HepG2 (cell line): ENCODE measurements at regions of chr9 and their contacts with region 1.

Region 1: GRCh38 chr9:128863647-128864046 is 18.1 kb downstream of the KYAT1 start:
- DNase-seq: peak; percentile 72
- ATAC-seq: peak; percentile 99
- H3K4me3 ChIP-seq: no peak overlapping the region; a peak in 1 of 6 replicates
- H3K27ac ChIP-seq: peak overlapping the region; percentile 49
- H3K4me1 ChIP-seq: peaks cover 34% of the 10 kb centered on the region
- H3K27me3 ChIP-seq: no peaks in the 10 kb centered on the region
- CTCF ChIP-seq: peak; percentile 98
- EP300 ChIP-seq: no peak
- POLR2A ChIP-seq: no peak
- RAD21 ChIP-seq: peak; percentile 99

Region 2: GRCh38 chr9:128927731-128928411 is 64.2 kb after region 1 on chr9:
- CTCF ChIA-PET with region 1: interaction called, 54 read pairs
- POLR2A ChIA-PET with region 1: no interaction called
- in situ Hi-C with region 1: no loop called
- intact Hi-C with region 1: loop called (anchors 1 kb)
- DNase-seq: no peak
- ATAC-seq: peak; percentile 89
- H3K4me3 ChIP-seq: no peak overlapping the region
- H3K27ac ChIP-seq: no peak overlapping the region
- H3K4me1 ChIP-seq: peaks cover 17% of the 10 kb centered on the region
- H3K27me3 ChIP-seq: no peaks in the 10 kb centered on the region
- CTCF ChIP-seq: peak; percentile 96
- EP300 ChIP-seq: no peak
- POLR2A ChIP-seq: no peak
- RAD21 ChIP-seq: peak; percentile 92

Region 3: DNA sequence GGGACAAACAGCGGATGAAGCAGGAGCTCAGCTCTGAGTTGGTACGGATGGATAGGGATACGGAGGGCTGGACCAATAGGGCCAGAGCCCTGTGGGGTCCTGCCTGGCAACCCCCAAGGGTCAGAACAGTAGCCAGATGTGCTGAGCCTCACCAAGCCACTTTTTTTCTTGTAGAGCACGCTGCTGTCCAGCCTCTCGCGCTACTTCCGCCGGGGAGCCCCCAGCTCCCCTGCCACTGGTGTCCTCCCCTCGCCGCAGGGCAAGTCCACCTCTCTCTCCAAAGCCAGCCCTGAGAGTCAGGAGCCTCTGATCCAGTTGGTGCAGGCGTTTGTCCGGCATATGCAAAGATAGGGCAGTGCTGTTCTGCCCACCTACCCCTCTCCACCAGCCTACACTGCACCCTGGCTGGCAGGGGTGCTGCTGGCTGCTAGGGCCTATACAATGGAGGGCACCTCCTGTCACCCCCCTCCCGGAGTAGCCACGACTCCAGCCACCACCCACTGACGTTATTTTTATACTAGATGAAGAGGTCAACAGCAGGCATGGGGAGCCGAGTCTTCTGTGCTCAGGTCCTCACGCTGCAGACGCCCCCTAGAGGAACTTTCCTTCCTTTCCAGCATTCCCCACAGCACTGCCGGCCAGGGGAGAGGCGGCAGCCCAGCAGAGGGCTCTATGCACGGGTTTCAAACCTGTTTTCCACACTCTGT is 142.8 kb after region 1 on chr9:
- CTCF ChIA-PET with region 1: no interaction called
- POLR2A ChIA-PET with region 1: no interaction called
- in situ Hi-C with region 1: no loop called
- intact Hi-C with region 1: loop called (anchors 10 kb)
- DNase-seq: peak; percentile 67
- ATAC-seq: peak; percentile 86
- H3K4me3 ChIP-seq: no peak overlapping the region
- H3K27ac ChIP-seq: no peak overlapping the region
- H3K4me1 ChIP-seq: no peaks in the 10 kb centered on the region
- H3K27me3 ChIP-seq: no peaks in the 10 kb centered on the region
- CTCF ChIP-seq: peak; percentile 81
- EP300 ChIP-seq: no peak
- POLR2A ChIP-seq: peak; percentile 4 to 31; a peak in 2 of 4 replicates
- RAD21 ChIP-seq: 0 out of 2 replicates have a peak, but pooled peaks have one; percentile 20